OCI-LY7 (cell line): ENCODE measurements at regions of chr4 and their contacts with region 1.

Region 1: GRCh38 chr4:153822316-153822715 is 33.4 kb upstream of the SFRP2 start:
- DNase-seq: no peak
- H3K4me3 ChIP-seq: no peak overlapping the region
- H3K27ac ChIP-seq: no peak overlapping the region
- H3K4me1 ChIP-seq: no peaks in the 10 kb centered on the region
- CTCF ChIP-seq: no peak

Region 2: GRCh38 chr4:152372444-152372843 is 1449.9 kb before region 1 on chr4:
- CTCF ChIA-PET with region 1: no interaction called
- POLR2A ChIA-PET with region 1: interaction called, 12 read pairs
- intact Hi-C with region 1: no loop called
- DNase-seq: no peak
- H3K4me3 ChIP-seq: no peak overlapping the region
- H3K27ac ChIP-seq: no peak overlapping the region
- H3K4me1 ChIP-seq: no peaks in the 10 kb centered on the region
- CTCF ChIP-seq: no peak